Common myeloid progenitor, CD34-positive (primary cell): ENCODE measurements at regions of chr11 and their contacts with region 1.

Region 1: GRCh38 chr11:65180877-65181568 is 705 bp upstream of the CAPN1 start:
- DNase-seq: peak; percentile 83 to 91 (median 88)
- H3K4me3 ChIP-seq: peak overlapping the region; percentile 28 to 96 (median 81)
- H3K27ac ChIP-seq: peak overlapping the region; percentile 15 to 74
- H3K4me1 ChIP-seq: peaks cover 0 to 28% (median 22%) of the 10 kb centered on the region in 4 experiments
- H3K27me3 ChIP-seq: no peaks in the 10 kb centered on the region

Region 2: GRCh38 chr11:65111744-65112414 is 69.1 kb before region 1 on chr11 and contains the start of gene TM7SF2:
- CTCF ChIA-PET with region 1: interaction called, 39 read pairs
- POLR2A ChIA-PET with region 1: interaction called, 11 read pairs
- DNase-seq: peak; percentile 91 to 95 (median 94)
- H3K4me3 ChIP-seq: peak within 1 kb of the TSS; percentile 52 to 80 (median 74)
- H3K27ac ChIP-seq: peak within 1 kb of the TSS in 1 of 2 experiments; percentile 61
- H3K4me1 ChIP-seq: peaks cover 0 to 51% (median 40%) of the 10 kb centered on the region in 4 experiments
- H3K27me3 ChIP-seq: no peaks in the 10 kb centered on the region

Region 3: DNA sequence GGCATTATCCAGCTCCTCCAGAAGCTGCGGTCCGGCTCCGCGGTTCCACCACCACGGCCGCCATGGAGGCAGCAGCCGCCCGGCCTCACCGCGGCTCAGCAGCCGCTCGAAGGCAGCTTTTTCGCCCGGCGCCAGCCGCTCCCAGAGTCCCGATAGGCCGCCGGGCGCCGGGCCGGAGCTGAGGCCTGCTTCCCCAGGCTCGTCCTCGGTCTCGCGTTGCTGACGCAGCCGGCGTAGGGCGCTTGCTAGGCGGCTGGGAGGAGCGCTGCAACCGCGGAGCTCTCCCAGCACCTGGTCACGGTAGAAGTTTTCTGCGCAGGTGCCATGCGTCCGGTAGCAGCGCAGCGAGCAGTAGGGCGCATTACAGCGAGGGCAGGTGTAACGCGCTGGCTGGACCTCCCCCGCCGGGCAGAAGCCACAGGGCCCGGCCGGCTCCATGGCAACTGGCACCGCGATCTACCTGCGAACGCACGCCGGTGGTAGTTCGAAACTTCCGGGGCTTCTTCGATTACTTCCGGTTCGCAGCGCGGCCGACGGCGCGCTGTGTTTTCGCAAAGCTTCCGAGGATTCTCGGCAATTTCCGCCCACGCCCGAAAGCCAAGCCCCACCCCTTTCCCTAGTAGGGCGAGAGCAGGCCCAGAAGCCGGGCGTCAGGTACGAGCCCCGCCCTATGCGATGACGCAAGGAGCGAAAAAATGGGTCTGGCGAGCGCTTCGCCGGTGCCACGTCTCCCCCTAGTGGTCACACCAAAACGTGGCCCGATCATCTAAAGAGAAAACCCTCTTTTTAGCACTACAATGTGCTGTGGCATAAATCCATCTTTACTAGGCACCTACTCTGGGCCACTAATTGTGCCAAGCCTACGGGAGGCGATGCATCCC is 63.6 kb before region 1 on chr11 and contains the start of gene ZNHIT2:
- CTCF ChIA-PET with region 1: interaction called, 39 read pairs
- POLR2A ChIA-PET with region 1: interaction called, 11 read pairs
- DNase-seq: peak; percentile 99 to 100 (median 99)
- H3K4me3 ChIP-seq: peak within 1 kb of the TSS; percentile 50 to 90 (median 88)
- H3K27ac ChIP-seq: peak within 1 kb of the TSS; percentile 68 to 86
- H3K4me1 ChIP-seq: peaks cover 6 to 52% (median 36%) of the 10 kb centered on the region in 4 experiments
- H3K27me3 ChIP-seq: no peaks in the 10 kb centered on the region

Region 4: GRCh38 chr11:65150509-65151271 is 30.3 kb before region 1 on chr11:
- CTCF ChIA-PET with region 1: interaction called, 12 read pairs
- POLR2A ChIA-PET with region 1: interaction called, 3 read pairs
- DNase-seq: peak; percentile 97 to 99 (median 99)
- H3K4me3 ChIP-seq: peak overlapping the region in 5 of 7 experiments; percentile 5 to 59 (median 45)
- H3K27ac ChIP-seq: peak overlapping the region; percentile 80 to 90
- H3K4me1 ChIP-seq: peaks cover 13 to 46% (median 44%) of the 10 kb centered on the region in 4 experiments
- H3K27me3 ChIP-seq: no peaks in the 10 kb centered on the region